Activated naive CD4-positive, alpha-beta T cell treated with anti-CD3 and anti-CD28 coated beads for 36 hours (primary cell): ENCODE measurements at regions of chr9 and their contacts with region 1.

Region 1: DNA sequence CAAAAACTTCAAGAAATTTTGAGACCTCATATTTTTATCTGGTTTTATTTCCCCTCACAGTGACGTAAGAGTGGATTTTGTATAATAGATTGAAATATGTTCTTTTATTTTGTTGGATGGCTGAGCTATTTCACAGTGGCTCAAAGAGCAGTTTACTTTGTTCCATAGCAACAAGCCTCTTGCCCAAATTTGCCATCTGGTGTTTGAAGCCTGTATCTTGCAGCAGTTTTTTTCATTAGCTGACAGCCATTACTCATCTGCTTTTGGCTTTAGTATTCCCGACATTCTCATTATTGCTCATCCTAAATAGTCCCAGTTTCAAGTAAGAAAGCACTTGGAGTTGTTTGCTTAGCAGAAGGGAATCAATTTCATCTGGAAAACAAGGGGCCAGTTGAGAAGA is 36.3 kb downstream of the GDA start:
- DNase-seq: no peak
- H3K4me3 Mint-ChIP-seq: no peak overlapping the region
- H3K27ac Mint-ChIP-seq: no peak overlapping the region
- H3K4me1 Mint-ChIP-seq: no peaks in the 10 kb centered on the region
- H3K27me3 Mint-ChIP-seq: no peaks in the 10 kb centered on the region

Region 2: GRCh38 chr9:71121275-71122021 is 1064.1 kb before region 1 on chr9 and contains the start of gene TRPM3:
- CTCF ChIA-PET with region 1: no interaction called
- intact Hi-C with region 1: no loop called
- DNase-seq: no peak
- H3K4me3 Mint-ChIP-seq: no peak within 1 kb of the TSS
- H3K27ac Mint-ChIP-seq: no peak within 1 kb of the TSS
- H3K4me1 Mint-ChIP-seq: peaks cover 3% of the 10 kb centered on the region
- H3K27me3 Mint-ChIP-seq: peaks cover 15% of the 10 kb centered on the region
- total RNA-seq, gene TRPM3: 0.02 TPM in 1 of 2 experiments, not detected in the other

Region 3: GRCh38 chr9:72247549-72247948 is 62.0 kb after region 1 on chr9:
- CTCF ChIA-PET with region 1: no interaction called
- intact Hi-C with region 1: loop called (anchors 10 kb)
- DNase-seq: no peak
- H3K4me3 Mint-ChIP-seq: no peak overlapping the region
- H3K27ac Mint-ChIP-seq: no peak overlapping the region
- H3K4me1 Mint-ChIP-seq: no peaks in the 10 kb centered on the region
- H3K27me3 Mint-ChIP-seq: peaks cover 9% of the 10 kb centered on the region